Cardiac septum (tissue), 1 donor: ENCODE measurements at regions of chr5 and their contacts with region 1.

Region 1: DNA sequence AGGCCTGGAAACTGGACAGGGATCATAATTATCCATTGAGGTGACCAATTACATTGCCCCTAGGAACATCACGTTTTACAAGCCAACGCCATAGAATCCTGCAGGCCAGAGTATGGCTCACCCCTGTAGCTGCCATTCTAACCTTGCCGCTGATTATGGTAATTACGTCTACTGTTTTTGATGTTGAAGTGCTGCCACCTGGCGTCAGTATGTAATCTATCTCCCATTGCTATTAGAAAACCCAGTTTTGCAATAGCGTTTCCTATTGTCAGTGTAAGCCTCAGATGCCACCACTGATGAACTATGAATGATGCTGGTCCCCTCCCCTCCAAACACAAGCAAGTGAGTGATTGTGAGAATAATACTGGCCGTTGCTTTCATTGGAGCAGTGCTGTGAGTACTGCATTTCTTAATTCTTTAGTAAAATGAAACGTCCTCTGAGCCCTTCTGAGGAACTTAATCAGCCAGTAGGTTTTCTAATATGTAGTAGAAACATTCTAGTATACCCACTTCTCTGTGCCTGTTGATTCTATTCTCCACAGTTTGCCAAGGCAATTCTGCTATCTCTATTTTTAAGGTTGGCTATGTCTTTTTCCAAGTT is 100.5 kb upstream of the NMUR2 start:
- DNase-seq: no peak

Region 2: GRCh38 chr5:152142840-152143469 is 362.6 kb before region 1 on chr5:
- intact Hi-C with region 1: loop called (anchors 10 kb)
- DNase-seq: no peak

Region 3: GRCh38 chr5:152271420-152271819 is 234.1 kb before region 1 on chr5:
- intact Hi-C with region 1: loop called (anchors 10 kb)
- DNase-seq: no peak

Region 4: DNA sequence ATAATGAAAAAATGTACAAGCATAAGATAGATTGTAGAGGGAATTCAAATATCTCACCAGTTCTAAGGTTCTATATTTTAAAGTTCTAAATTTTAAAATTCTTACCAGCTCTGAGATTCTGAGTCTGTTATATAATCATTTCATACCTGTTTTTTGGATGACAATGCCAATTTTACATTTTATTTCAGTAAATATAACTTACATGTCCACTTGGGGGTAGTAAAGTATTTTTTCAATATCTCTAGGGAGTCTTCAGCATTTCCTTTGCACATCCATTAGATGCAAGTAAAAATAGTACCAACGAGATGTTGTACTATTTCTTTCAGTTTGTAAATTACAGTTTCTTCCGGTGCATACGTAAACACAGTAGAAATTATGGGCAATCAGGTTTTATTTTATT is 126.2 kb before region 1 on chr5:
- intact Hi-C with region 1: loop called (anchors 10 kb)
- DNase-seq: no peak